ENCODE measurements at regions of chr11 and their contacts with region 1.

Region 1: GRCh38 chr11:47373876-47374720 is 4.2 kb downstream of the SPI1 start:
- DNase-seq: peak; percentile 90
- H3K4me3 ChIP-seq: no peak overlapping the region
- H3K27ac ChIP-seq: no peak overlapping the region
- H3K4me1 ChIP-seq: peaks cover 0 to 6% (median 0%) of the 10 kb centered on the region in 4 donors
- H3K27me3 ChIP-seq: no peaks in the 10 kb centered on the region
- CTCF ChIP-seq: peak; percentile 78 to 94 (median 90)
- EP300 ChIP-seq: no peak
- POLR2A ChIP-seq: no peak

Region 2: GRCh38 chr11:46991391-46991790 is 382.7 kb before region 1 on chr11:
- intact Hi-C with region 1: no loop called
- DNase-seq: no peak
- H3K4me3 ChIP-seq: no peak overlapping the region
- H3K27ac ChIP-seq: no peak overlapping the region
- H3K4me1 ChIP-seq: no peaks in the 10 kb centered on the region
- H3K27me3 ChIP-seq: no peaks in the 10 kb centered on the region
- CTCF ChIP-seq: no peak
- EP300 ChIP-seq: no peak
- POLR2A ChIP-seq: no peak

Region 3: DNA sequence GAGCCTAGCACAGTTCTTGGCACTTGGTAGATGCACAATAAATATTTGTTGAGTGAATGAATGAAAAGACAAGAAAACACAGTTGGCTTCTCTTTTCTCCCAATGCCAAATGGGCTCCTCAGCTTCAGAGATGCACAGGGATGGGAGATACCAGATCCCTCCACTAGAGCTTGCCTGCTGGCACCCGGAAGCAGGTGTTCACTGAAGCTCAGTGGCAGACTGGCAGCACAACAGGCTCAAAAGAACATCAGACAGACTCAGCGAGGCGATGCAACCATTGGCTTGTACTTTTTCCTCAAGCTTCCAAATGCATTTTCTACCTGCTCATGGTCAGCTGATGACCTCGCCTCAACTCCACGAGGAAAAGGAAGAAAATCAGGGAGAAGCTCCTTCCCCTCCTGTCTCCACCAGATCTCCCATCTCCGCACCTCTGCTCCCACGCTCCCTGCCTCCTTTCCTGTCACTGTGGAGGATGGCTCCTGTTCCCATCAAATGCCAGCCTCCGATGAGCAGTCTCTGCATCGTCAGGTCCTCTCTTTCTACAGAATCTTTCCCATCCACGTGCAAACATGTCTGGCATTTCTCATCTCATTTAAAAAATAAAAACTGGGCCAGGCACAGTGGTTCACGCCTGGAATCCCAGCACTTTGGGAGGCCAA is 69.1 kb after region 1 on chr11:
- intact Hi-C with region 1: no loop called
- DNase-seq: no peak
- H3K4me3 ChIP-seq: no peak overlapping the region
- H3K27ac ChIP-seq: no peak overlapping the region
- H3K4me1 ChIP-seq: peaks cover 0 to under 1% (median 0%) of the 10 kb centered on the region in 4 donors
- H3K27me3 ChIP-seq: no peaks in the 10 kb centered on the region
- CTCF ChIP-seq: no peak
- EP300 ChIP-seq: no peak
- POLR2A ChIP-seq: no peak

Region 4: DNA sequence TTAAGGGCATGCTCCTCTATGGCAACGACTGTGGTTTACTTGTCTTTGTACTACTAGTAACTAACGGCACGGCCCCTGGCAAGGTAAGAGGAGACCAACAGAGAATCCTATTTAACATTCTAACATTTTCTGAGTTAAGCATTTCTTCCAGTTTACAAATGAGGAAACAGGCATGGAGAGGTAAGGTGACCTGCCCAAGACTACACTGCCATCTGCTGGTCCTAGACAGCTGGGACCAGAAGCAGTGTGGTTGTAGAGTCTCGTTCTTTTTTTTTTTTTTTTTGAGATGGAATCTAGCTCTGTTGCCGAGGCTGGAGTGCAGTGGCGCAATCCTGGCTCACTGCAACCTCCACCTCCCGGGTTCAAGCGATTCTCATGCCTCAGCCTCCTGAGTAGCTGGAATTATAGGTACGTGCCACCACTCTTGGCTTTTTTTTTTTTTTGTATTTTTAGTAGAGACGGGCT is 80.1 kb after region 1 on chr11:
- intact Hi-C with region 1: loop called (anchors 1 kb)
- DNase-seq: peak; percentile 88
- H3K4me3 ChIP-seq: no peak overlapping the region
- H3K27ac ChIP-seq: no peak overlapping the region
- H3K4me1 ChIP-seq: peaks cover 0 to 8% (median 0%) of the 10 kb centered on the region in 4 donors
- H3K27me3 ChIP-seq: no peaks in the 10 kb centered on the region
- CTCF ChIP-seq: peak; percentile 49 to 71 (median 65)
- EP300 ChIP-seq: no peak
- POLR2A ChIP-seq: no peak